ENCODE measurements at regions of chr22 and their contacts with region 1.

Region 1: DNA sequence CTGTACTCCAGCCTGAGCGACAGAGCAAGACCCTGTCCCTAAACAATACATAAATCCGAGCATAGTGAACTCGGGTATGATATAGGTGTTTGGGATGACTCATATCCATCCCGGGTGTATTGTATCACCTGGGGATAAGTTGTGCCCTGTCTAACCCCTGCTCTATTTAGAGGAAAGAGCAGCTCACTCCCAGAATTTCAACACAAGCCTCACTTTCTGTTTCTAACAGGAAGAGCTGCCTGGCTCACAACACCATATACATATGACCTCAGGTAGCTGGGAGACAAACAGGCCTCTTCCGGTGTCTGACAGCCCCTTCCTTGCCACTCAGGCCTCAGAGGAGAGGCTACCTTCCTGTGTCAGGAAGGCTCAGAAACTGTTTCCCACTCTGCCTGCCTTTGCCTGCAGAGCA is 9.9 kb upstream of the MICALL1 start:
- DNase-seq: peak; percentile 59
- H3K4me3 ChIP-seq: no peak overlapping the region
- H3K27ac ChIP-seq: peak overlapping the region; percentile 43 to 79 (median 64)
- H3K4me1 ChIP-seq: peaks cover 23 to 45% (median 33%) of the 10 kb centered on the region in 4 donors
- H3K27me3 ChIP-seq: no peaks in the 10 kb centered on the region
- CTCF ChIP-seq: no peak
- EP300 ChIP-seq: no peak
- POLR2A ChIP-seq: no peak

Region 2: GRCh38 chr22:37647928-37648327 is 248.3 kb before region 1 on chr22:
- in situ Hi-C with region 1: no loop called
- intact Hi-C with region 1: no loop called
- DNase-seq: peak; percentile 67
- H3K4me3 ChIP-seq: no peak overlapping the region
- H3K27ac ChIP-seq: peak overlapping the region in 1 of 4 donors; percentile 41
- H3K4me1 ChIP-seq: peaks cover 8 to 9% (median 9%) of the 10 kb centered on the region in 4 donors
- H3K27me3 ChIP-seq: no peaks in the 10 kb centered on the region
- CTCF ChIP-seq: no peak
- EP300 ChIP-seq: no peak
- POLR2A ChIP-seq: no peak

Region 3: DNA sequence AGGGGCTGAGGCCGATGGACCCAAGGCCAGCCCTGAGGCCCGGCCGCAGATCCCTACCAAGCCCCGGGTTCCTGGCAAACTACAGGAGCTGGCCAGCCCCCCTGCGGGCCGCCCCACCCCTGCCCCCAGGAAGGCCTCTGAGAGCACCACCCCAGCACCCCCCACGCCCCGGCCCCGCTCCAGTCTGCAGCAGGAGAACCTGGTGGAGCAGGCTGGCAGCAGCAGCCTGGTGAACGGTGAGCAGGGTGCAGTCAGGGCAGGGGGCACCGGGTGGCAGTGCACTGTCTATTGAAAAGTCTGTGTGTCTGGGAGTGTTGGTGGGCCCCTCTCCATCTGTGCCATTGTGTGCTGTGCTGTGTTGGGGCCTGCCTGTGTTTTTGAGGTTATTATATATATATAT is 26.0 kb after region 1 on chr22:
- in situ Hi-C with region 1: no loop called
- intact Hi-C with region 1: no loop called
- DNase-seq: no peak
- H3K4me3 ChIP-seq: no peak overlapping the region
- H3K27ac ChIP-seq: peak overlapping the region in 1 of 4 donors; percentile 46
- H3K4me1 ChIP-seq: no peaks in the 10 kb centered on the region
- H3K27me3 ChIP-seq: no peaks in the 10 kb centered on the region
- CTCF ChIP-seq: no peak
- EP300 ChIP-seq: no peak
- POLR2A ChIP-seq: no peak

Region 4: DNA sequence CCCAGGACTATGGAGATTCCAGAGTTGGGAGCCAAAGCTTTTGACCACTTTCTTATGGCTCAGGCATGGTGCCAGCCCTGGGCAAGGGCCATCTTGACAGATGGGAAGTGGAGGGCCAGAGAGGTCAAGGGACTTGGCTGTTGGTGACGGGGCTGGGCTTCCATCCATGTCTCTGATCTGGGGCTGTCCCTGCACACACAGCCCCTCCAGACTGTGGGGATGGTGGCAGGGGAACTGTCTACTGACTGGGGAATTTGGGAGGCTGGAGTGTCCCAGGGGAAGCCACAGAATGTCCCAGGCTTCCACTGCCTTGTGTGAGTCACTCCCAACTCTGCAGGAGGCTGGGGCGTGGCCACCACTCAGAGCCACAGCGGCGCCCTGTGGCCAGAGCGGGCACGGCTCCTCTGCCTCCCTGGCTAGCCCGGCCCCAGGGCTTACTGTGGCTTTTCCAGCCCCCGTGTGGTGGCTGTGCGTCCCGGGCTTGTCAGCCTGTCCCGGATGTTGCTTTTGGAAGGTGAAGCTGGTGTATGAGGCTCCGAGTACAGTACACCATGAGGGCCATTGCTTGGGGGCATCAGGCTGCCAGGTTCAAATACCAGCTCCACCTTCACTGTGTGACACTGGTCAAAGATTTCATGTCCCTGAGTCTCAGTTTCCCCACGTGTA is 37.7 kb after region 1 on chr22:
- in situ Hi-C with region 1: no loop called
- intact Hi-C with region 1: loop called (anchors 5 kb)
- DNase-seq: peak; percentile 93
- H3K4me3 ChIP-seq: no peak overlapping the region
- H3K27ac ChIP-seq: peak overlapping the region; percentile 68 to 88 (median 74)
- H3K4me1 ChIP-seq: peaks cover 11 to 17% (median 15%) of the 10 kb centered on the region in 4 donors
- H3K27me3 ChIP-seq: no peaks in the 10 kb centered on the region
- CTCF ChIP-seq: peak; percentile 88 to 97 (median 96)
- EP300 ChIP-seq: no peak
- POLR2A ChIP-seq: no peak

Region 5: GRCh38 chr22:37940698-37941376 is 44.6 kb after region 1 on chr22:
- in situ Hi-C with region 1: no loop called
- intact Hi-C with region 1: loop called (anchors 5 kb)
- DNase-seq: no peak
- H3K4me3 ChIP-seq: no peak overlapping the region
- H3K27ac ChIP-seq: no peak overlapping the region
- H3K4me1 ChIP-seq: no peaks in the 10 kb centered on the region
- H3K27me3 ChIP-seq: no peaks in the 10 kb centered on the region
- CTCF ChIP-seq: no peak
- EP300 ChIP-seq: no peak
- POLR2A ChIP-seq: no peak

Region 6: GRCh38 chr22:37953437-37954179 is 57.4 kb after region 1 on chr22 and contains the starts of genes C22orf23 and POLR2F:
- in situ Hi-C with region 1: no loop called
- intact Hi-C with region 1: no loop called
- DNase-seq: peak; percentile 98
- H3K4me3 ChIP-seq: peak within 1 kb of the TSS; percentile 84 to 95 (median 92)
- H3K27ac ChIP-seq: peak within 1 kb of the TSS; percentile 72 to 88 (median 84)
- H3K4me1 ChIP-seq: peaks cover 18 to 22% (median 20%) of the 10 kb centered on the region in 4 donors
- H3K27me3 ChIP-seq: peaks cover 10% of the 10 kb centered on the region
- CTCF ChIP-seq: no peak
- EP300 ChIP-seq: no peak
- POLR2A ChIP-seq: peak; percentile 74
- total RNA-seq, gene C22orf23: not detected
- total RNA-seq, gene POLR2F: 7.6 to 65.5 (median 32.6) TPM

Region 7: GRCh38 chr22:38412435-38413084 is 516.4 kb after region 1 on chr22:
- in situ Hi-C with region 1: no loop called
- intact Hi-C with region 1: no loop called
- DNase-seq: no peak
- H3K4me3 ChIP-seq: peak overlapping the region in 3 of 4 donors; percentile 2 to 32 (median 23)
- H3K27ac ChIP-seq: no peak overlapping the region
- H3K4me1 ChIP-seq: peaks cover 8 to 11% (median 10%) of the 10 kb centered on the region in 4 donors
- H3K27me3 ChIP-seq: no peaks in the 10 kb centered on the region
- CTCF ChIP-seq: peak; percentile 63 to 88 (median 78)
- EP300 ChIP-seq: no peak
- POLR2A ChIP-seq: no peak

Measured in transverse colon (tissue), 4 donors.